PC-9 (cell line): ENCODE measurements at regions of chr3 and their contacts with region 1.

Region 1: GRCh38 chr3:112013058-112013783 is 14.5 kb downstream of the TAGLN3 start:
- DNase-seq: peak; percentile 48 to 64
- H3K4me3 ChIP-seq: no peak overlapping the region
- H3K27ac ChIP-seq: no peak overlapping the region
- H3K4me1 ChIP-seq: no peaks in the 10 kb centered on the region
- H3K27me3 ChIP-seq: no peaks in the 10 kb centered on the region
- CTCF ChIP-seq: peak; percentile 90

Region 2: GRCh38 chr3:111577794-111578685 is 435.2 kb before region 1 on chr3:
- CTCF ChIA-PET with region 1: interaction called, 6 read pairs
- POLR2A ChIA-PET with region 1: no interaction called
- intact Hi-C with region 1: loop called (anchors 5 kb)
- DNase-seq: peak; percentile 40 to 79
- H3K4me3 ChIP-seq: no peak overlapping the region
- H3K27ac ChIP-seq: no peak overlapping the region
- H3K4me1 ChIP-seq: peaks cover 12% of the 10 kb centered on the region
- H3K27me3 ChIP-seq: no peaks in the 10 kb centered on the region
- CTCF ChIP-seq: peak; percentile 80

Region 3: DNA sequence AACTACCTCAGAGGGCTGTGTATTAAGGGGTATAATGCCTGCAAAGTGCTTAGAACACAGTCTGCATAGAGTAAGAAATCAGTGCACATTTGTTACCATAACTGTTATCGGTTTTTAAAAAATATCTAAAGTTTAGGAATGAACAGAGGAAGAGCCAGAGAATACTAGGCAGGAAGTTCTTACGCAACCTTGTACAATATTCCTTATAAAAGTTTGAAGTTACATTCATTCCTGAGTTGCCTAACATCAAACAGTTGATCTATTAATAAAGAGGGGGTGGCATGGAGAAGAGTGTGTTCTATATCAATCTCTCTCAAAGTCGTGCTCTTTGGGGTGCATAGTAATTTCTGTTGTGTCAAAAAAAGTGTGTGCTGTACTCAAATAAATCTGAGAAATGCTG is 176.1 kb before region 1 on chr3:
- CTCF ChIA-PET with region 1: no interaction called
- POLR2A ChIA-PET with region 1: no interaction called
- intact Hi-C with region 1: no loop called
- DNase-seq: no peak
- H3K4me3 ChIP-seq: no peak overlapping the region
- H3K27ac ChIP-seq: no peak overlapping the region
- H3K4me1 ChIP-seq: no peaks in the 10 kb centered on the region
- H3K27me3 ChIP-seq: no peaks in the 10 kb centered on the region
- CTCF ChIP-seq: no peak

Region 4: DNA sequence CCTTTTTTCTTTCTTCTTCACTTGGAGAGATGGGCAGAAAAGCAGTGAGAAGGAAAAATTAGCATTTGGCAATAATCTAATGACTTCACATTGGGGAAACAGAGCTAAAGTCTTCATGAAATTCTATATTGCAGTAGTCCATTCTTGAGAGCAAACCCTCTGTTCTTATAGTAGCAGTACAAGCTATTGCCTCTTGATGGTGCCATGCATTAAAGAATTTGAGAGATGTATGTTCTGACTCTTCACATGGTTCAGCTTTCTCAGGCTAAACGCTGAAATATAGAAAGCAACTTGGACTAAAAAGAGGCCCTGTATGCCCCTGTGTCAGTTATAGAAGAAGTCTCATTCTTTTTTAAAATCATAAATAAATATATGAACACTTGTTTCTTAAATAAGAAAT is 118.1 kb before region 1 on chr3:
- CTCF ChIA-PET with region 1: interaction called, 12 read pairs
- POLR2A ChIA-PET with region 1: no interaction called
- intact Hi-C with region 1: no loop called
- DNase-seq: peak in 1 of 2 experiments; percentile 63
- H3K4me3 ChIP-seq: no peak overlapping the region
- H3K27ac ChIP-seq: peak overlapping the region; percentile 4; the same call in 1 of the 2 replicates
- H3K4me1 ChIP-seq: 0 out of 2 replicates have a peak, but pooled peaks cover 4% of the 10 kb centered on the region
- H3K27me3 ChIP-seq: no peaks in the 10 kb centered on the region
- CTCF ChIP-seq: peak; percentile 77

Region 5: GRCh38 chr3:111978493-111979433 is 34.5 kb before region 1 on chr3 and contains the start of gene ABHD10:
- CTCF ChIA-PET with region 1: interaction called, 8 read pairs
- POLR2A ChIA-PET with region 1: interaction called, 10 read pairs
- intact Hi-C with region 1: no loop called
- DNase-seq: peak; percentile 95 to 96
- H3K4me3 ChIP-seq: peak within 1 kb of the TSS; percentile 80
- H3K27ac ChIP-seq: peak within 1 kb of the TSS; percentile 62
- H3K4me1 ChIP-seq: peaks cover 30% of the 10 kb centered on the region
- H3K27me3 ChIP-seq: no peaks in the 10 kb centered on the region
- CTCF ChIP-seq: no peak
- total RNA-seq, gene ABHD10: 57.4 and 57.6 TPM in 2 replicates

Region 6: DNA sequence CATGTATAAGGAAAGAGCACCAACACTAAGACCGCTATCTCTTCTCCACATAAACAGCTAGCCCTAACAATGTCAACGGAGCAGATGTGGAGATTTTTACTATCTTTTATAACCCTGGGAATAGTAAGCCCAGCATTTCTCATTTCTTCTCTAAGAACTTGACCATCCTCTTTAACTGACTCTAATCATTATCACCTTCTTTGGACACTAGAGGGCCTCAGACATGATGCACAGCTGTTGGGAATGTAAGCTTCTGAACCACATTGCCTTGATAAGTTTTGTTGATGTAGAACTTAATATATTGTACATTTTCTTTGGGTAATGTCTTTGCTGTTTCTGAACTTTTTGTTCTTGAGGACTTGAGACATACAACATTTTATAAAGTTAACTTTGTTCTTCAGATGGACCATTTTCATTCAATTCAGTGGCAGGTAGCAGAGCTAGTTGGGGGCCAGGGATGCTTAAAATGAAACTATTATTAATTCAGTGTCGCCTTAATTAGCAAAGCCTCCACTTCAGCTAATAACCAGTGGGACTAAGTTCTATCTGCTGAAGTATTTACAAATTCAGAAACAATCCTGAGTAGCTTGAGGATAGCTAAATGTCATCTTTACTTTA is 24.1 kb before region 1 on chr3:
- CTCF ChIA-PET with region 1: interaction called, 19 read pairs
- POLR2A ChIA-PET with region 1: no interaction called
- intact Hi-C with region 1: loop called (anchors 2 kb)
- DNase-seq: peak in 1 of 2 experiments; percentile 61
- H3K4me3 ChIP-seq: no peak overlapping the region
- H3K27ac ChIP-seq: no peak overlapping the region
- H3K4me1 ChIP-seq: no peaks in the 10 kb centered on the region
- H3K27me3 ChIP-seq: no peaks in the 10 kb centered on the region
- CTCF ChIP-seq: peak; percentile 96

Region 7: DNA sequence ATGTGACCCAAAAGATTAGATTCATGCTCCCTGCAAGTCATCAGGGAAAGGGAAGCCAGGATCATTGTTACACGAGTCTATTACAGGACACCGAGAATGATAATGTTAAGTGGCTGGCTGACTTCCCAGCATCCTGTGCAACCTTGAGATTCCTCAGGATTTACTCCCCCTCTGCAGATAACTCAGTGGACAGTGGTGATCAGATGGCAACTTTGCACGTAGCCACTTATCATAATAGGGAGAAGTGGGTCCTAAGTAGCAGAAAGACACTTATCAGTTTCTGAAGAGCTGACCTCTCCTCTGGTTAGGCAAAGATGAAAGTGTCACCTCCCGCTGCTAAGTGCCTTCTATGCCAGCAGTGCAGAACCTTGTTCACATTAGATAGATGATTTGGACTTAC is 14.6 kb after region 1 on chr3:
- CTCF ChIA-PET with region 1: no interaction called
- POLR2A ChIA-PET with region 1: no interaction called
- intact Hi-C with region 1: no loop called
- DNase-seq: no peak
- H3K4me3 ChIP-seq: no peak overlapping the region
- H3K27ac ChIP-seq: no peak overlapping the region
- H3K4me1 ChIP-seq: no peaks in the 10 kb centered on the region
- H3K27me3 ChIP-seq: no peaks in the 10 kb centered on the region
- CTCF ChIP-seq: no peak